Activated CD4-positive, alpha-beta memory T cell treated with anti-CD3 and anti-CD28 coated beads, Interleukin-2, amount 10 ng/mL, durations not matched to agents 7 days and 5 days (primary cell): ENCODE measurements at regions of chr12 and their contacts with region 1.

Region 1: GRCh38 chr12:92049403-92049802 is 96.2 kb downstream of the BTG1 start:
- DNase-seq: no peak
- H3K4me3 Mint-ChIP-seq: no peak overlapping the region
- H3K27ac Mint-ChIP-seq: no peak overlapping the region
- H3K4me1 Mint-ChIP-seq: peaks cover 65% of the 10 kb centered on the region
- H3K27me3 Mint-ChIP-seq: no peaks in the 10 kb centered on the region

Region 2: DNA sequence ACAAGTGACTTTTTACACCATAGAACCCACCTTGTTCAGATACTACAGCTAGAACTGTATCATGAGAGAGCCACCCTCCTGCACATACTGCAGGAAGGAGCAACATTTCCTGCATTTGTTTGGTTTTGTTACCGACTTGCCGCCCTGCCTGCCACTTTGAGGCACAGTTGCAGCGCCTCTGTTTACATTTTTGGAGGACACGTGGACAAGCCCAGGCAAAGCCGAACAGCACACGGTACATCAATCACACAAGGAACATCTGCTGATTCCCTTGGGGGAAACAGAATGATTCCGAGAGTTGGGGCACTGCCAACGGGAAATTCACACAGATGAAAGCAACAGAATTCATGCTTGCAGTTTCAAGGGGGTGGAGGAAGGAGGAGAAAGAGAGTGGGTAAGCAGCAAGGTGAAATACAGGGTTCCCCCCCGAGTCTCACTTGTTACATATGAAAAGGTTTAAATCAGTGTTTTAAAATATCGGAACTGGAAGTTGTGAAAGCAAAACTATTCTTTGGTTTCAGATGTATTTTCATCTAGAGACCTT is 14.5 kb before region 1 on chr12:
- CTCF ChIA-PET with region 1: interaction called, 7 read pairs
- POLR2A ChIA-PET with region 1: interaction called, 11 read pairs
- DNase-seq: peak; percentile 54
- H3K4me3 Mint-ChIP-seq: peak overlapping the region; percentile 88
- H3K27ac Mint-ChIP-seq: peak overlapping the region; percentile 95
- H3K4me1 Mint-ChIP-seq: peaks cover 60% of the 10 kb centered on the region
- H3K27me3 Mint-ChIP-seq: no peaks in the 10 kb centered on the region